ENCODE measurements at regions of chr15 and their contacts with region 1.

Region 1: DNA sequence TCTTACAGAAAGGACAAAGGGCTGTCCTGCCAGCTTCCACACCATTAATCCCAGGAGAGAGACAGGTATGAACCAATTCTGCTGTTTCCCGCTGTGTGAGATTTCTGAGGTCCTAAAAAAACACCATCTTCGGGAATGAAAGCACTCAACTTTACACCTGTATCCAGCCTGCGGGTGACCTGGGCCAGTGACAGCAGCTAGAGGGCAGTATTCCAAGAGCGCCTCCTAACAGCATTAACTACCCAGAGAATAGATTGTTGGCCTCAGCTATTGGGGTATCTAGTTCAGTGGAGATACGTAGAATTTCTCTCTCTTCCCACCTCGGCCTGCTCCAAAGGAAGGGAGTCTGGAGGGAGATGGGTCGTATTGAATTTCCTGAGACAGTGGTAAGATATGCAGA is 55.1 kb downstream of the WDR76 start:
- DNase-seq: peak; percentile 67
- ATAC-seq: peak; percentile 89
- H3K4me3 Mint-ChIP-seq: no peak overlapping the region
- H3K27ac Mint-ChIP-seq: peak overlapping the region; percentile 7; the same call in 1 of the 2 replicates
- H3K4me1 Mint-ChIP-seq: peaks cover 16% of the 10 kb centered on the region
- H3K27me3 Mint-ChIP-seq: no peaks in the 10 kb centered on the region
- CTCF ChIP-seq: peak; percentile 50

Region 2: GRCh38 chr15:43465105-43465504 is 416.8 kb before region 1 on chr15:
- CTCF ChIA-PET with region 1: no interaction called
- POLR2A ChIA-PET with region 1: no interaction called
- DNase-seq: no peak
- ATAC-seq: no peak
- H3K4me3 Mint-ChIP-seq: no peak overlapping the region
- H3K27ac Mint-ChIP-seq: no peak overlapping the region
- H3K4me1 Mint-ChIP-seq: no peaks in the 10 kb centered on the region
- H3K27me3 Mint-ChIP-seq: no peaks in the 10 kb centered on the region
- CTCF ChIP-seq: no peak

Region 3: DNA sequence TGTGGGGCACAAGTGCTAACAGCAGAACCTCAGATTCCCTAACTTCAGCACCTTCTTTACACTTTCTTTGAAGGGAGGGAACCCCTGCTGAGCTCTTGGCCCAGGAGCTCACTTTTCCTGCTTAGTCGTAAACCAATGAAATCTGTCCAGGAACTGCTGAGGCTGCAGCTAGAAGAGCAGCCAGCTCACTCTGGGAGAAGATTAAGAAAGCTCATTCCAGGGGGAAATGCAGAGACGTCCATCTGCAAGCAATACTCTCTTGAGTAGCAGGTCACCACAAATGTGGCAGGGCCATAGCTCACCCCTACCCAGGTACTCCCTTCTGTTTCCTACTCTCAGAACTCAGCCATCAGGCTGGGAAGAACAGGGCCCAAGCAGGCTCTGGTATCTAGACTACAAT is 48.1 kb after region 1 on chr15:
- CTCF ChIA-PET with region 1: interaction called, 20 read pairs
- POLR2A ChIA-PET with region 1: no interaction called
- DNase-seq: peak; percentile 41
- ATAC-seq: peak; percentile 6
- H3K4me3 Mint-ChIP-seq: no peak overlapping the region
- H3K27ac Mint-ChIP-seq: peak overlapping the region; percentile 54
- H3K4me1 Mint-ChIP-seq: peaks cover 85% of the 10 kb centered on the region
- H3K27me3 Mint-ChIP-seq: no peaks in the 10 kb centered on the region
- CTCF ChIP-seq: no peak

Region 4: GRCh38 chr15:43966646-43967045 is 84.7 kb after region 1 on chr15:
- CTCF ChIA-PET with region 1: no interaction called
- POLR2A ChIA-PET with region 1: no interaction called
- DNase-seq: no peak
- ATAC-seq: no peak
- H3K4me3 Mint-ChIP-seq: no peak overlapping the region
- H3K27ac Mint-ChIP-seq: no peak overlapping the region
- H3K4me1 Mint-ChIP-seq: peaks cover 12% of the 10 kb centered on the region
- H3K27me3 Mint-ChIP-seq: no peaks in the 10 kb centered on the region
- CTCF ChIP-seq: no peak